Dorsolateral prefrontal cortex (tissue), 120 donors: ENCODE measurements at regions of chr21 and their contacts with region 1.

Region 1: GRCh38 chr21:42337830-42338728 is 12.7 kb downstream of the TFF2 start:
- DNase-seq: peak in 9 of 10 donors; percentile 49 to 75 (median 69)
- H3K4me3 ChIP-seq: peak overlapping the region in 18 of 59 donors; percentile 6 to 47 (median 23)
- H3K27ac ChIP-seq: peak overlapping the region in 2 of 59 donors; percentile 4 to 40
- H3K27me3 ChIP-seq: peaks cover 0 to 21% (median 3%) of the 10 kb centered on the region in 45 donors
- CTCF ChIP-seq: peak; percentile 20 to 81 (median 64)

Region 2: GRCh38 chr21:42350896-42351543 is 12.9 kb after region 1 on chr21 and contains the start of gene TFF2:
- intact Hi-C with region 1: loop called in 1 of 2 experiments (anchors 1 kb)
- DNase-seq: peak in 3 of 10 donors; percentile 14 to 25 (median 15)
- H3K4me3 ChIP-seq: no peak within 1 kb of the TSS
- H3K27ac ChIP-seq: no peak within 1 kb of the TSS
- H3K27me3 ChIP-seq: no peaks in the 10 kb centered on the region
- CTCF ChIP-seq: no peak
- total RNA-seq, gene TFF2: not detected

Region 3: GRCh38 chr21:42636538-42636930 is 298.5 kb after region 1 on chr21:
- intact Hi-C with region 1: no loop called
- DNase-seq: no peak
- H3K4me3 ChIP-seq: no peak overlapping the region
- H3K27ac ChIP-seq: no peak overlapping the region
- H3K27me3 ChIP-seq: peaks cover 0 to 13% (median 0%) of the 10 kb centered on the region in 45 donors
- CTCF ChIP-seq: no peak